Activated naive CD4-positive, alpha-beta T cell treated with anti-CD3 and anti-CD28 coated beads, Interleukin-2, amount 10 ng/mL, durations not matched to agents 7 days and 5 days (primary cell): ENCODE measurements at regions of chr12 and their contacts with region 1.

Region 1: DNA sequence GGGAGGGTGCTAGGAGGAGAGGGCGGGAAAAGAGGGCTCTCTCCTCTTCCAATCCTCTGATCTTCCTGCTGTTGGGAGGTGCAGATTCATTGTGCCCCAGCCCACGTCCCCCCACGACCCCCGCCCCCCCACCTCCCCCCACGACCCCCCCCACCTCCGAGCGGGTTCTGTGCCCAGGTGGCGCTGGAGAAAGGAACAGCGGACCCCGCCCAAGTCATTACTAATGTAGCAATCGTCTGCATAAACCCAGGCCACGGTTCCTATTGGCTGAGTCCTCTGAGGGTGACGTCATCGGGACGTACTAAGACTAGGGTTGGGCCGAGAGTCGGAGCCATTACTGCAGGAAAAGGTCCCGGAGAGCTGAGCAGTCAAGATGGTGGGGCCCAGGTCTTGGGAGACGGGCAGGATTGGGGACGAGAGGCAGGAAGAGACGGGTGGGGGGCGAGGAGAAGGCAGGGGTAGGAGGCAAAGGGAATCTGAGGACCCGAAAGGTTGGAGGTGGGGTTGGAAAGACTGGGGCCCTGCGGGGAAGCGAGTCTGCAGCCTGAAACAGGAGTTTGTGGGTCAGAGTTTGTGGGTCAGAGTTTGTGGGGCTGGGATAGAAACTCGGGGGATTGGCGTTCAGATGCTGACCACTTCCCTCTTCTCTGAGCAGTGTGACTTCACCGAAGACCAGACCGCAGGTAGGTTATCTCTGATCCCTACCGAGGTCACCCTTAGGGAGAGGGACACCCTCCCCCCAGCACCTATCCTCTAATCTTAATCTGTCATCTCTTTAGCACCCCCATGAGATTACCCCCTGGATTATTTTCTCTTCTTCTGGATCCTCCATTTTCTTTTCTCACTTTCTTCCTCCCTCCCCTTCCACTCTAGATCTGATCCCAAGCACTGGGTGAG is at the start of gene MYL6:
- DNase-seq: peak; percentile 97
- H3K4me3 Mint-ChIP-seq: peak within 1 kb of the TSS; percentile 95
- H3K27ac Mint-ChIP-seq: peak within 1 kb of the TSS; percentile 94
- H3K4me1 Mint-ChIP-seq: peaks cover 51% of the 10 kb centered on the region
- H3K27me3 Mint-ChIP-seq: no peaks in the 10 kb centered on the region

Region 2: GRCh38 chr12:56127888-56128669 is 30.2 kb before region 1 on chr12 and contains the start of gene ESYT1:
- CTCF ChIA-PET with region 1: interaction called, 21 read pairs
- DNase-seq: peak; percentile 99
- H3K4me3 Mint-ChIP-seq: peak within 1 kb of the TSS; percentile 97
- H3K27ac Mint-ChIP-seq: peak within 1 kb of the TSS; percentile 94
- H3K4me1 Mint-ChIP-seq: peaks cover 78% of the 10 kb centered on the region
- H3K27me3 Mint-ChIP-seq: peaks cover 3% of the 10 kb centered on the region

Region 3: GRCh38 chr12:56206457-56207166 is 48.3 kb after region 1 on chr12:
- CTCF ChIA-PET with region 1: no interaction called
- DNase-seq: peak; percentile 65
- H3K4me3 Mint-ChIP-seq: no peak overlapping the region
- H3K27ac Mint-ChIP-seq: no peak overlapping the region
- H3K4me1 Mint-ChIP-seq: no peaks in the 10 kb centered on the region
- H3K27me3 Mint-ChIP-seq: no peaks in the 10 kb centered on the region